ENCODE measurements at regions of chr22 and their contacts with region 1.

Region 1: DNA sequence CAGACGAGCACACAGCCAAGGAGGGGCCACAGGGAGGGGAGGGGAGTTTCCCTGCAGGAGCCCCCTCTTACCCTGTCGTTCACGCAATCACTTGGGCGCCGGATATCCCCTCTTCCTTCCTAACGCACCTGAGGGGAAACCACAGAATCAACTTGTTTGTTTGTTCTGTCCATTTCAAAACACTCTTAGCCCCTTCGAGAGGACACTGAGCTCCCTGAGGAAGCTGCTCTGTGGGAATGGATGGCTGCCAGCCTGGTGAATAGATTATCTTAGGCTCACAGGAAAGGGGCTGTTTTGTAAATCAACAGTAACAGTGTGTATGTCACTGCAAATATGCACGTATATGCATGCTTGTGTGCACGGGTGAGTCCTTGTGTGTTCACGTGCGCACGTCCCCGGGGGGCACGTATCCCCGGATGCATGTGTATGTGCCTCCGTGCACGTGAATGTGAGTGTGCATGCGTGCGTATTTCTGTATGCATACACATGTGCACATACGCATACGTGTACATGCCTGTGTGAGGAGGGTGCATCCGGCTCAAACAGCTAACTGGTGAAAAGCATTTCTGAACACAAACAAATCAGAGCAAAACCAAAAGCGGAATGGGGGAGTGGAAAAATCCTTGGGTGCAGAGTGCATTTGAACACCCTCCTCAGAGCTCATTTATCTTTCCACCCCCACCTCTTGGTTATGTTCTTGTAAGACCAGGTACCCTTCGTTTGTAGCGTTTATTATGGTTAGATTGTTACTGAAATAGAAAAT is 7.2 kb downstream of the ARSA start:
- DNase-seq: peak; percentile 78 to 96 (median 94)
- ATAC-seq: peak; percentile 71 to 73
- H3K4me3 Mint-ChIP-seq: peak overlapping the region; percentile 88 to 95 (median 92)
- H3K27ac Mint-ChIP-seq: peak overlapping the region; percentile 94 to 100 (median 98)
- H3K4me1 Mint-ChIP-seq: peaks cover 17 to 41% (median 38%) of the 10 kb centered on the region in 4 donors
- H3K27me3 Mint-ChIP-seq: no peaks in the 10 kb centered on the region

Region 2: DNA sequence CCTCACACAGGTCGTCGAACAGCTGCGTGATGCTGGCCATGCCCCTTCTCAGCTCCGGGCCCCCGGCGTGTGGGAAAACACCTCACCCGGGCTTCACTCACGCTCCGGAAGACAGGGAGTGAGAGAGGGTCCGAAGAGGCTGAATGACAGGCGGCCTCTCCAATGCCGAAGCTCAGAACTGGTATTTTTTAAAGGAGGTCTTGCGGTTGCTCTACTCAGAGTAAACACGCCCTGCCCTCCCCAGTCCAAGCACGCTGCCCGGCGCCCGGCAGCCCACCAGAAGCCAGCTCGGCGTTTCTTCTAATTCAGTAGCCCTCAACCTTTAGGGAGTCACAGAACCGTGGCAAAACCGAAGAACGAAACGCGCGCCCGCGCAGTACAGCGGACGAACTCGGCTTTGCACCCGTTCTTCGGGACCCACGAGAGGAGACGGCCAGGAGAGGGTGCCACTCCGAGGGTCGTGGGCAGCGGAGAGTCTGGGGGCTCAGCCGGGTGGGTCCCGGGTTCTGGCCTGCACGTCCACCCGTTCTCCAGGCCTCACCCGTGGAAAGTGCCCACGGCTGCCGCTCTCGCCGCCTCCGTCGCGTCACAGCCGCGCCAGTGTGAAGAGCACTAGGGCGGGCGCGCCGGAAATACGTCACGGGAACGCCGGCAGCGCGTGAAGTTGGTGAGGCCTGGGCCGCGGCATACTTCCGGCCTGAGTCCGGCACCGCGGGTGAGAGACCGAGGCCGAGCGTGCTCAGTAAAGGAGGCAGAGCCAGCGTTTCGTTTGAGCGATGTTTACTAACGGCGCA is 376.2 kb before region 1 on chr22 and contains the start of gene TUBGCP6:
- POLR2A ChIA-PET with region 1: interaction called, 17 read pairs
- DNase-seq: peak; percentile 83 to 93 (median 90)
- ATAC-seq: peak; percentile 79 to 81
- H3K4me3 Mint-ChIP-seq: peak within 1 kb of the TSS; percentile 85 to 100 (median 99)
- H3K27ac Mint-ChIP-seq: peak within 1 kb of the TSS; percentile 98 to 100 (median 100)
- H3K4me1 Mint-ChIP-seq: peaks cover 11 to 60% (median 31%) of the 10 kb centered on the region in 4 donors
- H3K27me3 Mint-ChIP-seq: no peaks in the 10 kb centered on the region
- polyA plus RNA-seq, gene TUBGCP6: 9.3 to 25.2 (median 17.3) TPM

Region 3: DNA sequence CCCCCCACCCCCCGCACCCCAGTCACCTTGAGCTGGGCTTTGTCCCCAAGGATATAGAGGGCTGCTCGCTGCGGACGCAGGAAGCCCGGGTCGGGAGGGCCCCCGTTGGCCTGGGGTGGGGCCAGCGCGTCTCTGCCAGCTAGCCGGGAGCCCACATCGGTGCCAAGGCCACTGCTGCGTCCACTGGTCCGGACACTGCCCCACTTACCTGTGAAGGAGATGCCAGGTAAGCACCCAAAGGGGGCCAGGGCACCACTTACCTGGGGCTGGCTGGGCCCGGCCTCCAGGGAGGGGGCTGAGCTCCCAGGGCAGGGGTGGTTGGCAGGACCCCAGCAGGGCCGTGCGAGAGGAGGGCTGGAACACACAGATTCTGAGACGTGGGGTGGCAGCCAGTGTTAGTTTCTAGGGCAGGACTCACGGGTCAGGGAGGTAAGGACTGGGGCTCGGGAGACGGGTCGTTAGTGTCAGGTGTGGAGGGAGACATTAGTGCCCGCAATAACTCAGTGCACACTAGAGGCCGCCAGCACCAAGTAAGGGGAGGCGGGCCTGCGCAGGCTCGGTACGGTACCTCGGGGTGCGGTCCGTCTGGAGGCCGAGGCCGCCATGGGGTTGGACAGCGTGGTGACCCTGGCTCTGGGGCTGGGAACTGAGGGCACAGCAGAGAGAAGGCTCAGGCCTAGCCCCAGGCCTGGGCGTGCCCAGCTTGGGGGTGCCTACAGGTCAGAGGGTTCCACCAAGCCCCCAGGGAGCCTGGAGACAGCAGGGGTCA is 164.1 kb before region 1 on chr22:
- POLR2A ChIA-PET with region 1: no interaction called
- DNase-seq: no peak
- ATAC-seq: peak in 1 of 2 donors; percentile 47
- H3K4me3 Mint-ChIP-seq: peak overlapping the region in 1 of 10 donors; percentile 48
- H3K27ac Mint-ChIP-seq: peak overlapping the region in 4 of 10 donors; percentile 41 to 83 (median 45)
- H3K4me1 Mint-ChIP-seq: peaks cover 6 to 15% (median 9%) of the 10 kb centered on the region in 4 donors
- H3K27me3 Mint-ChIP-seq: no peaks in the 10 kb centered on the region

Region 4: GRCh38 chr22:50469377-50470305 is 151.1 kb before region 1 on chr22:
- POLR2A ChIA-PET with region 1: interaction called, 17 read pairs
- DNase-seq: peak; percentile 87 to 100 (median 96)
- ATAC-seq: peak; percentile 78 to 87
- H3K4me3 Mint-ChIP-seq: peak overlapping the region; percentile 75 to 98 (median 86)
- H3K27ac Mint-ChIP-seq: peak overlapping the region; percentile 88 to 98 (median 96)
- H3K4me1 Mint-ChIP-seq: peaks cover 40 to 86% (median 74%) of the 10 kb centered on the region in 4 donors
- H3K27me3 Mint-ChIP-seq: no peaks in the 10 kb centered on the region

Region 5: GRCh38 chr22:50525390-50526068 is 95.2 kb before region 1 on chr22 and contains the start of gene SCO2:
- POLR2A ChIA-PET with region 1: interaction called, 82 read pairs
- DNase-seq: peak; percentile 95 to 99 (median 98)
- ATAC-seq: peak; percentile 71 to 79
- H3K4me3 Mint-ChIP-seq: peak within 1 kb of the TSS; percentile 72 to 91 (median 86)
- H3K27ac Mint-ChIP-seq: peak within 1 kb of the TSS; percentile 70 to 94 (median 88)
- H3K4me1 Mint-ChIP-seq: peaks cover 18 to 41% (median 33%) of the 10 kb centered on the region in 4 donors
- H3K27me3 Mint-ChIP-seq: peaks cover 0 to under 1% (median 0%) of the 10 kb centered on the region in 5 donors
- polyA plus RNA-seq, gene SCO2: 4.0 to 8.3 (median 6.8) TPM

Region 6: GRCh38 chr22:50544078-50544745 is 76.6 kb before region 1 on chr22:
- POLR2A ChIA-PET with region 1: interaction called, 43 read pairs
- DNase-seq: peak; percentile 65 to 84 (median 72)
- ATAC-seq: peak; percentile 53 to 58
- H3K4me3 Mint-ChIP-seq: peak overlapping the region; percentile 54 to 74 (median 66)
- H3K27ac Mint-ChIP-seq: peak overlapping the region in 9 of 10 donors; percentile 31 to 83 (median 73)
- H3K4me1 Mint-ChIP-seq: peaks cover 13 to 65% (median 35%) of the 10 kb centered on the region in 4 donors
- H3K27me3 Mint-ChIP-seq: no peaks in the 10 kb centered on the region

Region 7: GRCh38 chr22:50582562-50583293 is 38.0 kb before region 1 on chr22 and contains the start of gene CHKB:
- POLR2A ChIA-PET with region 1: interaction called, 51 read pairs
- DNase-seq: peak; percentile 96 to 99 (median 98)
- ATAC-seq: peak; percentile 92 to 94
- H3K4me3 Mint-ChIP-seq: peak within 1 kb of the TSS; percentile 84 to 98 (median 94)
- H3K27ac Mint-ChIP-seq: peak within 1 kb of the TSS; percentile 88 to 98 (median 96)
- H3K4me1 Mint-ChIP-seq: peaks cover 9 to 39% (median 31%) of the 10 kb centered on the region in 4 donors
- H3K27me3 Mint-ChIP-seq: no peaks in the 10 kb centered on the region
- polyA plus RNA-seq, gene CHKB: 23.0 to 26.9 (median 25.1) TPM

Region 8: GRCh38 chr22:50674606-50675549 is 54.1 kb after region 1 on chr22:
- POLR2A ChIA-PET with region 1: interaction called, 12 read pairs
- DNase-seq: peak in 2 of 10 donors; percentile 10 to 15
- ATAC-seq: peak; percentile 34 to 46
- H3K4me3 Mint-ChIP-seq: peak overlapping the region; percentile 58 to 89 (median 64)
- H3K27ac Mint-ChIP-seq: peak overlapping the region in 5 of 10 donors; percentile 10 to 72 (median 37)
- H3K4me1 Mint-ChIP-seq: peaks cover 15 to 35% (median 21%) of the 10 kb centered on the region in 4 donors
- H3K27me3 Mint-ChIP-seq: peaks cover 13 to 27% (median 22%) of the 10 kb centered on the region in 5 donors